ENCODE measurements at regions of chr17 and their contacts with region 1.

Region 1: GRCh38 chr17:51888816-51889215 is 269.7 kb downstream of the CA10 start:
- DNase-seq: no peak
- ATAC-seq: no peak
- H3K4me3 ChIP-seq: no peak overlapping the region
- H3K27ac ChIP-seq: no peak overlapping the region
- H3K4me1 ChIP-seq: no peaks in the 10 kb centered on the region
- H3K27me3 ChIP-seq: no peaks in the 10 kb centered on the region
- CTCF ChIP-seq: no peak

Region 2: GRCh38 chr17:51793686-51794085 is 95.1 kb before region 1 on chr17:
- intact Hi-C with region 1: no loop called
- DNase-seq: no peak
- ATAC-seq: no peak
- H3K4me3 ChIP-seq: no peak overlapping the region
- H3K27ac ChIP-seq: no peak overlapping the region
- H3K4me1 ChIP-seq: no peaks in the 10 kb centered on the region
- H3K27me3 ChIP-seq: peaks cover 0 to 13% (median 3%) of the 10 kb centered on the region in 7 donors
- CTCF ChIP-seq: no peak

Region 3: GRCh38 chr17:51840688-51841087 is 48.1 kb before region 1 on chr17:
- intact Hi-C with region 1: no loop called
- DNase-seq: no peak
- ATAC-seq: no peak
- H3K4me3 ChIP-seq: no peak overlapping the region
- H3K27ac ChIP-seq: no peak overlapping the region
- H3K4me1 ChIP-seq: no peaks in the 10 kb centered on the region
- H3K27me3 ChIP-seq: peaks cover 0 to 12% (median 0%) of the 10 kb centered on the region in 7 donors
- CTCF ChIP-seq: no peak

Region 4: DNA sequence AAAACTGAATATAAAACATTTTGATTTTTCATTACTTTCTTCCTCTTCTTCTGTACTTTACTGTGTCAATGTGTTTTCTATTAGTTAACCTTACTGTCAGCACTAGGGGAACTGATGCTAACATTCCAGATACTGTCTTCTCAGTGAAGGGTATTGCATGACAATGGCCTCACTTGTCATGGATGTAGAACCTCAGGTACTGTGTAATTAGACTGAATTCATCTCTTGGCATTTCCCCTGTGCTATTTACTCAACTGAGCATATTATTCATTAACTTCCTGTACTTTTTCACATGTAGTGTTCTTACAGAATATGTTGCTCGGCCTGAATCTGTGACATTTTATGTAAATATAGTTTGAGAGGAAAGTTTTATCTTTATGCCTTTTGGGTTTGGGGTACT is 32.7 kb after region 1 on chr17:
- intact Hi-C with region 1: no loop called
- DNase-seq: no peak
- ATAC-seq: no peak
- H3K4me3 ChIP-seq: no peak overlapping the region
- H3K27ac ChIP-seq: no peak overlapping the region
- H3K4me1 ChIP-seq: no peaks in the 10 kb centered on the region
- H3K27me3 ChIP-seq: peaks cover 0 to 6% (median 0%) of the 10 kb centered on the region in 7 donors
- CTCF ChIP-seq: no peak

Region 5: GRCh38 chr17:51957786-51958185 is 69.0 kb after region 1 on chr17:
- intact Hi-C with region 1: loop called in 1 of 10 experiments (anchors 10 kb)
- DNase-seq: no peak
- ATAC-seq: no peak
- H3K4me3 ChIP-seq: no peak overlapping the region
- H3K27ac ChIP-seq: no peak overlapping the region
- H3K4me1 ChIP-seq: no peaks in the 10 kb centered on the region
- H3K27me3 ChIP-seq: no peaks in the 10 kb centered on the region
- CTCF ChIP-seq: no peak

Region 6: DNA sequence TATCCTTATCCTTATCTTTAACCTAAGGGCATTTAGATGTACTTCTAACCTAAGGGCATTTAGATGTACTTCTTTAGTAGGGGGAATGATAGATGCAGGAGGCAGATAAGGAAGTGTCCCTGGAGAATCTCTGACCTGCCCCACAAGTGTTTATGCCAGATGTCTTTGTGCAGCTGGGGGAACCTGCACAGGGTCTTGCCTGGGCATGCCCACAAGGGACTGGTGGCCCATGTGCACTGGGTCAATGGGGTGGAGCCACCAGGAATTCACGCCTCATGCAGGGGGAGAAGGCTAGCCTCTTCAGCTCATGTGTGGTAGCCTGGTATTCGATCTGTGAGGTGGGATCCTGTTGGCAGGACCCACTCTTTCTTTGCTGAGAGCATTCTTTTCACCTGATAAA is 231.6 kb after region 1 on chr17:
- intact Hi-C with region 1: no loop called
- DNase-seq: no peak
- ATAC-seq: no peak
- H3K4me3 ChIP-seq: no peak overlapping the region
- H3K27ac ChIP-seq: no peak overlapping the region
- H3K4me1 ChIP-seq: no peaks in the 10 kb centered on the region
- H3K27me3 ChIP-seq: peaks cover 0 to 5% (median 0%) of the 10 kb centered on the region in 7 donors
- CTCF ChIP-seq: no peak

Measured in heart right ventricle (tissue), 16 donors.